Naive thymus-derived CD4-positive, alpha-beta T cell (primary cell): ENCODE measurements at regions of chr20 and their contacts with region 1.

Region 1: GRCh38 chr20:32674362-32674789 is 635 bp upstream of the C20orf203 start:
- DNase-seq: peak; percentile 37 to 74 (median 65)
- ATAC-seq: peak; percentile 68
- H3K4me3 ChIP-seq: no peak overlapping the region
- H3K4me3 Mint-ChIP-seq: peak overlapping the region in 2 of 10 donors; percentile 21 to 38
- H3K27ac ChIP-seq: no peak overlapping the region
- H3K27ac Mint-ChIP-seq: peak overlapping the region in 3 of 9 donors; percentile 15 to 42 (median 29)
- H3K4me1 ChIP-seq: peaks cover 9 to 14% of the 10 kb centered on the region in 2 donors
- H3K4me1 Mint-ChIP-seq: peaks cover 6 to 40% (median 29%) of the 10 kb centered on the region in 7 donors
- H3K27me3 ChIP-seq: no peaks in the 10 kb centered on the region
- H3K27me3 Mint-ChIP-seq: peaks cover 0 to 5% (median 0%) of the 10 kb centered on the region in 5 donors

Region 2: GRCh38 chr20:32626859-32627636 is 47.3 kb before region 1 on chr20:
- CTCF ChIA-PET with region 1: no interaction called
- POLR2A ChIA-PET with region 1: no interaction called
- intact Hi-C with region 1: no loop called
- DNase-seq: peak in 1 of 9 donors; percentile 17
- ATAC-seq: peak; percentile 62
- H3K4me3 ChIP-seq: no peak overlapping the region
- H3K4me3 Mint-ChIP-seq: peak overlapping the region in 7 of 10 donors; percentile 10 to 49 (median 42)
- H3K27ac ChIP-seq: no peak overlapping the region
- H3K27ac Mint-ChIP-seq: peak overlapping the region in 1 of 9 donors; percentile 42
- H3K4me1 ChIP-seq: peaks cover 0 to 8% of the 10 kb centered on the region in 2 donors
- H3K4me1 Mint-ChIP-seq: peaks cover 0 to 16% (median 7%) of the 10 kb centered on the region in 7 donors
- H3K27me3 ChIP-seq: no peaks in the 10 kb centered on the region
- H3K27me3 Mint-ChIP-seq: peaks cover 0 to 2% (median 0%) of the 10 kb centered on the region in 5 donors

Region 3: DNA sequence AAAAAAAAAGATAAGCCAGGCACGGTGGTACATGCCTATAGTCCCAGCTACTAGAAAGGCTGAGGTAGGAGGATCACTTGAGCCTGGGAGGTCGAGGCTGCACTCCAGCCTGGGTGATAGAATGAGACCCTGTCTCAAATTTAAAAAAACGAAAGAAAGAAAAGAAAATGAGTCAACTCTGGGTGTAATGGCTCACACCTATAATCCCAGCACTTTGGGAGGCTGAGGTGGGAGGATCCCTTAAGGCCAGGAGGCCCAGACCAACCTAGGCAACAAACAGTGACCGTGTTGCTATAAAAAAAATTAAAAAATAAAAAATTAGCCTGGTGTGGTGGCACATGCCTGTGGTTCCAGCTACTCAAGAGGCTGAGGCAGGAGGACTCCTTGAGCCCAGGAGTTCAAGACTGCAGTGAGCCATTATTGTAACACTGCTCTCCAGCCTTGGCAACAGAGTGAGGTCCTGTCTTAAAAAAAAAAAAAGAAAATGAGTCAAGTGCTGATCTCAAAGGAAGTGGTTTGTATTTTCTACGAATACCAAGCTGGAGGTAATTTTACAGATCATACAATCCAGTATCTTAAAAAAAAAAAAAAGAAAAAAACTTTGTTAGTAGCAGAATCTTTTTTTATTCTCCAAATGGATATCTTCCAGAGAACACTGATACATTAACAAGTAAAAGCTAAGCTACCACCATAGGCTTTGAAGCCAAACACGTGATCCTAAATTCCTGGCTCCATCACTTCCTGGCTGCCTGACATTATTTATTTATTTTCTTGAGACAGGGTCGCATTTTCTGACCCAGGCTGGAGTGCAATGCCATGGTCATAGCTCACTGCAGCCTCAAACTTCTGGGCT is 63.2 kb after region 1 on chr20:
- CTCF ChIA-PET with region 1: interaction called, 4 read pairs
- POLR2A ChIA-PET with region 1: interaction called, 4 read pairs
- intact Hi-C with region 1: loop called in 1 of 2 experiments (anchors 2 kb)
- DNase-seq: peak in 8 of 9 donors; percentile 33 to 78 (median 64)
- ATAC-seq: peak; percentile 88
- H3K4me3 ChIP-seq: peak overlapping the region; percentile 47
- H3K4me3 Mint-ChIP-seq: peak overlapping the region; percentile 50 to 78 (median 62)
- H3K27ac ChIP-seq: peak overlapping the region; percentile 75
- H3K27ac Mint-ChIP-seq: peak overlapping the region; percentile 82 to 95 (median 91)
- H3K4me1 ChIP-seq: peaks cover 36 to 37% of the 10 kb centered on the region in 2 donors
- H3K4me1 Mint-ChIP-seq: peaks cover 13 to 65% (median 52%) of the 10 kb centered on the region in 7 donors
- H3K27me3 ChIP-seq: no peaks in the 10 kb centered on the region
- H3K27me3 Mint-ChIP-seq: no peaks in the 10 kb centered on the region

Region 4: DNA sequence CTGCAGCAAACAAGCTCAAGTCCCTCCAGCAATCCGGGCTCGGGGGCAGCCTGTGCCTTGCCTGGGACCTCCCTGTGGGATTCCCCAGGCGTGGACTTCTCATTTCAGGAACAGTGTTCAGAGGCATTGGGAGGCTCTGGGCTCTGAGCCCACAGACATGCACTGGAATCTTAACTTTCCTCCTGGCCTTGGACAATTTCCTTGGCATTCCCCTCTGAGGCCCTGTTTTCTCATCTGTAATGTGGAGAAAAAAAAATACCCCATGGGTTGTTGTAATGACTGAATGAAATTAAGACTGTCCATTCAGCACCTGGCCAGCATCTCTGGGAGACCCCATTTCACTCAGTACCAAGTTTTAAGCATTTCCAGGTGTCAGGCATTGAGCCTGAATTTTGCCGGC is 422.6 kb after region 1 on chr20:
- CTCF ChIA-PET with region 1: interaction called, 5 read pairs
- POLR2A ChIA-PET with region 1: no interaction called
- intact Hi-C with region 1: loop called in 1 of 2 experiments (anchors 1 kb)
- DNase-seq: no peak
- ATAC-seq: no peak
- H3K4me3 ChIP-seq: no peak overlapping the region
- H3K4me3 Mint-ChIP-seq: no peak overlapping the region
- H3K27ac ChIP-seq: no peak overlapping the region
- H3K27ac Mint-ChIP-seq: no peak overlapping the region
- H3K4me1 ChIP-seq: peaks cover 0 to 8% of the 10 kb centered on the region in 2 donors
- H3K4me1 Mint-ChIP-seq: peaks cover 0 to 12% (median 5%) of the 10 kb centered on the region in 7 donors
- H3K27me3 ChIP-seq: no peaks in the 10 kb centered on the region
- H3K27me3 Mint-ChIP-seq: peaks cover 0 to 4% (median 0%) of the 10 kb centered on the region in 5 donors

Region 5: GRCh38 chr20:33299111-33299603 is 624.8 kb after region 1 on chr20:
- CTCF ChIA-PET with region 1: interaction called, 3 read pairs
- POLR2A ChIA-PET with region 1: no interaction called
- intact Hi-C with region 1: loop called in 1 of 2 experiments (anchors 1 kb)
- DNase-seq: peak; percentile 48 to 81 (median 70)
- ATAC-seq: peak; percentile 87
- H3K4me3 ChIP-seq: no peak overlapping the region
- H3K4me3 Mint-ChIP-seq: peak overlapping the region in 1 of 10 donors; percentile 8
- H3K27ac ChIP-seq: no peak overlapping the region
- H3K27ac Mint-ChIP-seq: no peak overlapping the region
- H3K4me1 ChIP-seq: peaks cover 0 to 6% of the 10 kb centered on the region in 2 donors
- H3K4me1 Mint-ChIP-seq: peaks cover 0 to 3% (median 0%) of the 10 kb centered on the region in 7 donors
- H3K27me3 ChIP-seq: no peaks in the 10 kb centered on the region
- H3K27me3 Mint-ChIP-seq: peaks cover 4 to 19% (median 12%) of the 10 kb centered on the region in 5 donors

Region 6: DNA sequence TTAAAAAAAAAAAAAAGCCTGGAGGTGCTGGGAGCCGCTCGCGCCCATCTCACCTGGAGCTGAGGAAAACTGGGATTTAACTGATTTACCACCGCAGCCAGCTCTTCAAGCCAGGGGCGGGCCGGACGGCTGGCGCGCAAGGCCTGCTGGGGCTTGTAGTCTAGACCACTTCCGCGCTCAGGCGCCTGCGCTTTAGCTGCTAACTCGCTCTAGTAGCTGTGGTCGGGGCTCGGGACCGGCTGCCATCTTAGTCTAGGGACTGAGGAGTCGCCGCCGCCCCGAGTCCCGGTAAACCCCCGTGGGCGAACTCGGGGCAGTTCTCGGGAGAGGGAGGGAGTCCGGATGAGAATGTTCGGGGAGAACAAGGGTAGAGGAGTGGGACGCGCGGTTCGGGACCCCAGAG is 1688.7 kb after region 1 on chr20 and contains the start of gene ITCH:
- CTCF ChIA-PET with region 1: no interaction called
- POLR2A ChIA-PET with region 1: no interaction called
- intact Hi-C with region 1: no loop called
- DNase-seq: peak; percentile 82 to 91 (median 88)
- ATAC-seq: peak; percentile 100
- H3K4me3 ChIP-seq: peak within 1 kb of the TSS; percentile 93
- H3K4me3 Mint-ChIP-seq: peak within 1 kb of the TSS; percentile 96 to 100 (median 98)
- H3K27ac ChIP-seq: peak within 1 kb of the TSS; percentile 98
- H3K27ac Mint-ChIP-seq: peak within 1 kb of the TSS; percentile 91 to 100 (median 98)
- H3K4me1 ChIP-seq: peaks cover 25 to 38% of the 10 kb centered on the region in 2 donors
- H3K4me1 Mint-ChIP-seq: peaks cover 26 to 50% (median 45%) of the 10 kb centered on the region in 7 donors
- H3K27me3 ChIP-seq: no peaks in the 10 kb centered on the region
- H3K27me3 Mint-ChIP-seq: peaks cover 0 to 3% (median 0%) of the 10 kb centered on the region in 5 donors
- total RNA-seq, gene ITCH: 50.8 to 70.4 (median 60.5) TPM